Posterior cingulate gyrus (tissue), 11 donors: ENCODE measurements at regions of chr17 and their contacts with region 1.

Region 1: GRCh38 chr17:78250891-78251794 is 19.7 kb downstream of the TMEM235 start:
- DNase-seq: peak; percentile 77 to 99 (median 87)

Region 2: GRCh38 chr17:78082988-78083387 is 168.2 kb before region 1 on chr17:
- intact Hi-C with region 1: loop called (anchors 10 kb)
- DNase-seq: peak in 1 of 10 donors; percentile 89

Region 3: GRCh38 chr17:78112518-78113226 is 138.5 kb before region 1 on chr17:
- intact Hi-C with region 1: loop called (anchors 2 kb)
- DNase-seq: peak; percentile 68 to 97 (median 86)

Region 4: GRCh38 chr17:78176548-78177025 is 74.6 kb before region 1 on chr17:
- intact Hi-C with region 1: loop called (anchors 1 kb)
- DNase-seq: peak; percentile 39 to 95 (median 68)

Region 5: DNA sequence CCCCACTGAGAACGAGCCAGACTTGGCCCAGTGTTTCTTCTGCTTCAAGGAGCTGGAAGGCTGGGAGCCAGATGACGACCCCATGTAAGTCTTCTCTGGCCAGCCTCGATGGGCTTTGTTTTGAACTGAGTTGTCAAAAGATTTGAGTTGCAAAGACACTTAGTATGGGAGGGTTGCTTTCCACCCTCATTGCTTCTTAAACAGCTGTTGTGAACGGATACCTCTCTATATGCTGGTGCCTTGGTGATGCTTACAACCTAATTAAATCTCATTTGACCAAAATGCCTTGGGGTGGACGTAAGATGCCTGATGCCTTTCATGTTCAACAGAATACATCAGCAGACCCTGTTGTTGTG is 36.5 kb before region 1 on chr17:
- intact Hi-C with region 1: loop called (anchors 5 kb)
- DNase-seq: no peak

Region 6: DNA sequence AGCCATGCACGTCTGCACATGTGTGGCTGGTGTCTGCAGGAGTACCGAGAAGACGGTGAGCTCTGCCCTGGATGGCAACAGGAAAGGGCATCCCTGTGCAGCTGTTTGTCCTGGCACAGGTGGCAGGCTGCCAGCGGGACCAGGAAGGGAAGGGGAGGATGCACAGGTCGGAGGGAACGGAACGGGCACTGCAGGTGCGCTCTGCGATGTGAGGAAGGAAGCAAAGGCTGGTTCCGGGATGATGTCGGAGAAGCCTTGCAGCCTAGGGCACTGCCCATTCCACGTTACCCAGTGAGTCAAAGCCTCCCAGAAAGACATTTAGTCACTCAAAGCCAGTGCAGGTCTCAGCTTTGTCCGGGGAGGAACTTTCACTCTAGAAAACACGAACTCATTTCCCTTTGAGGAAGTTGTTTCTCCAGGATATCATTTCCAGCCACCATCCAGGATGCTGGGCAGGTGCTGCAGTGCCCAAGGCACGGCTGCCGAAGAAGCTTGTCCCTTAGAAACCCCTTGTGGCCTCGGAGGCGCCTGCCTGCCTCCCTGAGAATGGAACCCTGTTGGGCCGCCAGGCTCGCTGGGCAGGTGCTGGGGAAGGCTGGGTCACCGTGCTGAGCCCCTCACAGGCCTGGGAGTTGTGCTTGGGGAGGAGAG is 24.3 kb before region 1 on chr17:
- intact Hi-C with region 1: no loop called
- DNase-seq: peak in 1 of 10 donors; percentile 57

Region 7: DNA sequence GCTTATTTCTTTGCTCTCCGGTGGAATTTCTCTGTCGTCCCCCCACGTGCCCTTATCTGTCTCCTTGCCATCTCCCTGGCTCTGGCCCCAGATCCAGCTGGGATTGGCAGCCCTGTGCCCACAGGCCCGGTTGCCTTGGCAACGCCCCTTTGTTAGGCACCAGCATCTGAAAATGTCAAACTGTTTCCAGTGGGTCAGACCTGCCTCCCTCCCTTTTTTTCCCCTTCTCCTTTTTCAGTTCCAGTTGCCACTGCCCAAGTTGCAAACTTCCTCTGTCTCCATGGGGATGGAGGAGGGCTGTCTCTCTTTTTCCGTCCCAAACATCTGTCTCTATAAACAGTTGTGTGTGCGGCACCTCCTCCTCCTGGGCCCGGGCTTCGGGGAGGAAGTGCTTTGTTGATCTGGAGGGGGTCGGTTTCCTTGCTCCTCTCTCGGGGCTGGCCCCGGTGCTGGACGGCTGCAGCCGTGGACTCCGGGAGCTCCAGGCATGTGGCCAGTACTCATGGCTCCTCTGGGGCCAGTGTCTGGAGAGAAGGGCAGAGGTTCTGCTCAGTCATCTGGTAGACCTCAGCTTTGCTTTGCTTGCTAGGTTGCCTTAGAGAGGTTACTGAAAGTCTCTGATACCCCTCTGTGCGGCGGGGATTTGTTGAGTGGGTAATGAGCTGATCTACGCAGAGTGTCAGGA is 73.4 kb after region 1 on chr17:
- intact Hi-C with region 1: no loop called
- DNase-seq: peak; percentile 28 to 95 (median 63)

Region 8: GRCh38 chr17:78421484-78422266 is 170.5 kb after region 1 on chr17:
- intact Hi-C with region 1: loop called (anchors 5 kb)
- DNase-seq: peak; percentile 55 to 96 (median 81)